HepG2 (cell line): ENCODE measurements at regions of chr19 and their contacts with region 1.

Region 1: GRCh38 chr19:35648017-35648961 is at the start of gene COX6B1:
- DNase-seq: peak; percentile 97
- ATAC-seq: peak; percentile 70
- H3K4me3 ChIP-seq: peak within 1 kb of the TSS; percentile 92 to 93 (median 93)
- H3K27ac ChIP-seq: peak within 1 kb of the TSS; percentile 74
- H3K4me1 ChIP-seq: peaks cover 51% of the 10 kb centered on the region
- H3K27me3 ChIP-seq: no peaks in the 10 kb centered on the region; a peak in 1 of 5 replicates
- CTCF ChIP-seq: no peak
- EP300 ChIP-seq: no peak
- POLR2A ChIP-seq: peak; percentile 79 to 90
- RAD21 ChIP-seq: no peak
- total RNA-seq, gene COX6B1: 487 and 598 TPM in 2 replicates

Region 2: GRCh38 chr19:35545001-35545911 is 103.0 kb before region 1 on chr19 and contains the start of gene TMEM147:
- CTCF ChIA-PET with region 1: no interaction called
- POLR2A ChIA-PET with region 1: interaction called, 3 read pairs
- in situ Hi-C with region 1: loop called (anchors 5 kb)
- intact Hi-C with region 1: loop called (anchors 10 kb)
- DNase-seq: peak; percentile 72
- ATAC-seq: peak; percentile 91
- H3K4me3 ChIP-seq: peak within 1 kb of the TSS; percentile 89 to 96 (median 92)
- H3K27ac ChIP-seq: peak within 1 kb of the TSS; percentile 66
- H3K4me1 ChIP-seq: peaks cover 47% of the 10 kb centered on the region
- H3K27me3 ChIP-seq: no peaks in the 10 kb centered on the region; a peak in 1 of 5 replicates
- CTCF ChIP-seq: no peak
- EP300 ChIP-seq: no peak
- POLR2A ChIP-seq: peak; percentile 59 to 83
- RAD21 ChIP-seq: peak; percentile 14; the same call in 1 of the 2 replicates
- total RNA-seq, gene TMEM147: 85.8 and 141 TPM in 2 replicates

Region 3: DNA sequence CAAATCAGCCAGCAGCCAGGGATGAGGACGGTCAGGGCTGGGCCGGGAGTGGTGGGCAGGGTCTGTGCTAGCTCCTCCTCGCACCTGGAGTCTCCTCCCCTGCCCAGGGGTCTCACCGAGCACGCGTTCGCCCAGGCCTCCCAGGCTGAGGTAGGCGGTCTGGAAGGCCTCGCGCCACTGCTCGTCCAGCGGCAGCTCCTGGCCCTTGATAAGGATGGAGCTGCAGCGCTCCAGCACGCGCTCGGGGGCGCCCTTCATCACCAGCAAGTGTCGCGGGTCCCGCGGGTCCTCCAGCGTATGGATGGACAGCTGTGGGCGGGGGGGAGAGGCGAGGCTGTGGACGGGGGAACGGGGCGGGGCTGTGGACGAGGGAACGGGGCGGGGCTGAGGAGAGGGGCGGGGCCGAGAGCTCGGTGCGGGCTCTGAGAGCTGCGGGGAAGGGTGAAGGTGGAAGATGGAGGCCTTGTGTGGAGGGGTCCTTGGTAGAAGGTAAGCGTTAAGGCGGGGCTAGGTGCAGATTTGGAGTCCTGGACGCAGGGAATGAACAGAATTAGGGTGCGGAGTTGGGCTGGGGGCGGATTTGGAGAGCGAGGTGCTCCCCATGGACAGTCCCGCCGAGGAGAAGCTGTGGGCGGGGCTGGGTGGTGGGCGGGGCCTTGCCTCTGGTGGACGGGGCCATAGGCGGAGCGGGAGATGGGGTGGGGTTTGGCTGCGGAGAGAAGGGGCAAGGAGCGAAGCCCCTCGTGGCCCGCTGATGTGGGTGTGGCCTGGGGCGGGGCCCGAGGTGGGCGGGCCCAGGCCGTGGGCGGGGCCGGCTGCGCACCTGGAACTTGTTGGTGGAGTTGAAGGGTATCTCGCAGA is 90.5 kb before region 1 on chr19:
- CTCF ChIA-PET with region 1: interaction called, 3 read pairs
- POLR2A ChIA-PET with region 1: interaction called, 5 read pairs
- in situ Hi-C with region 1: no loop called
- intact Hi-C with region 1: loop called (anchors 10 kb)
- DNase-seq: no peak
- ATAC-seq: peak; percentile 46
- H3K4me3 ChIP-seq: peak overlapping the region in 2 of 3 experiments; percentile 36 to 56; a peak in 3 of 6 replicates
- H3K27ac ChIP-seq: no peak overlapping the region
- H3K4me1 ChIP-seq: peaks cover 33% of the 10 kb centered on the region
- H3K27me3 ChIP-seq: peaks cover 1 to 54% of the 10 kb centered on the region in 2 experiments; a peak in 3 of 5 replicates
- CTCF ChIP-seq: peak; percentile 63
- EP300 ChIP-seq: no peak
- POLR2A ChIP-seq: no peak
- RAD21 ChIP-seq: no peak

Region 4: GRCh38 chr19:35661995-35662340 is 13.7 kb after region 1 on chr19:
- CTCF ChIA-PET with region 1: no interaction called
- POLR2A ChIA-PET with region 1: interaction called, 44 read pairs
- in situ Hi-C with region 1: no loop called
- intact Hi-C with region 1: loop called (anchors 1 kb)
- DNase-seq: no peak
- ATAC-seq: no peak
- H3K4me3 ChIP-seq: no peak overlapping the region
- H3K27ac ChIP-seq: peak overlapping the region; percentile 66
- H3K4me1 ChIP-seq: peaks cover 25% of the 10 kb centered on the region
- H3K27me3 ChIP-seq: no peaks in the 10 kb centered on the region
- CTCF ChIP-seq: no peak
- EP300 ChIP-seq: no peak
- POLR2A ChIP-seq: no peak
- RAD21 ChIP-seq: no peak

Region 5: GRCh38 chr19:35702223-35703012 is 54.1 kb after region 1 on chr19:
- CTCF ChIA-PET with region 1: no interaction called
- POLR2A ChIA-PET with region 1: interaction called, 12 read pairs
- in situ Hi-C with region 1: no loop called
- intact Hi-C with region 1: no loop called
- DNase-seq: peak; percentile 96
- ATAC-seq: peak; percentile 99
- H3K4me3 ChIP-seq: peak overlapping the region; percentile 50 to 77 (median 70)
- H3K27ac ChIP-seq: peak overlapping the region; percentile 56
- H3K4me1 ChIP-seq: peaks cover 29% of the 10 kb centered on the region
- H3K27me3 ChIP-seq: no peaks in the 10 kb centered on the region
- CTCF ChIP-seq: peak; percentile 22; the same call in 1 of the 2 replicates
- EP300 ChIP-seq: no peak
- POLR2A ChIP-seq: peak in 1 of 2 experiments; percentile 79; a peak in 2 of 4 replicates
- RAD21 ChIP-seq: no peak

Region 6: DNA sequence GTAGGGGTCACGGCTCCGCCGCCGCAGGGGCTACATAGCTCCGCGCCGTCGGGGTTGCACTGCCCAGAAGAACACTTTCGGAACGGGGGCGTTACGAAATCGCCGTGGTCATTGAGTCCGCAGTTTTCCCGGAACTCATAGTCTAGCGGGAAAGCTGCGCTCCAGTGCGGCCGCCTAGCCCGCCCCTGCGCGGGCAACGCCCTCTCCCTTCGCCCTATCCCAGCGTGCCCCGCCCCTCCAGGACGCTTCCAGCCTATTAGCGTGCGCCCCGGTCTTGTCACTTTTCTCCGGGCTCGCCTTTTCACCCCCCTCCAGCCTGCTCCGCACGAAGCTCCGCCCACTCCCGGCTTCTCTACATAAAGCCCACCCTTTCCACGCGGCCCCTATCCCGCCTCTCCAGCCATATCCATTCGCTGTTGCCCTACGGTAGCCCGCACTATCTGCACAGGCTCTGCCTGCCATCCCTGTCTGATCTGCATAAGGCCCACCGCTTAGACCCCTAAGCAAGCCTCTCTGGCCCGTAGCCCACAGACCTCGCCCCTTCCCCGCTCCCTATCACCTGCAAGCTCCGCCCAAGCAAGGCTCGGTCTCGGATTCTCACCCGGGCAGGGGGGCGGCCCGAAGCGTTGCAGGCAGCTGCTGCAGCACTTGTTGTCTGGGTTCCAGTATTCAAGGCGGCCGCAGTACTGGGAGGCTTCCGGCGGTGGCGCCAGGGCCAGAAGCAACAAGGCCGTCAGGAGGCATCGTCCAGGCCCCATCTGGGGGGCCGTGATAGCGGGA is 92.3 kb after region 1 on chr19:
- CTCF ChIA-PET with region 1: no interaction called
- POLR2A ChIA-PET with region 1: interaction called, 13 read pairs
- in situ Hi-C with region 1: no loop called
- intact Hi-C with region 1: no loop called
- DNase-seq: peak; percentile 96
- ATAC-seq: peak; percentile 84
- H3K4me3 ChIP-seq: peak overlapping the region; percentile 65 to 84 (median 80)
- H3K27ac ChIP-seq: peak overlapping the region; percentile 89
- H3K4me1 ChIP-seq: peaks cover 29% of the 10 kb centered on the region
- H3K27me3 ChIP-seq: no peaks in the 10 kb centered on the region; a peak in 1 of 5 replicates
- CTCF ChIP-seq: peak; percentile 61
- EP300 ChIP-seq: peak in 1 of 2 experiments; percentile 29; a peak in 1 of 4 replicates
- POLR2A ChIP-seq: peak; percentile 73 to 90
- RAD21 ChIP-seq: 0 out of 2 replicates have a peak, but pooled peaks have one; percentile 46